IMR-90 (cell line): ENCODE measurements at regions of chr12 and their contacts with region 1.

Region 1: DNA sequence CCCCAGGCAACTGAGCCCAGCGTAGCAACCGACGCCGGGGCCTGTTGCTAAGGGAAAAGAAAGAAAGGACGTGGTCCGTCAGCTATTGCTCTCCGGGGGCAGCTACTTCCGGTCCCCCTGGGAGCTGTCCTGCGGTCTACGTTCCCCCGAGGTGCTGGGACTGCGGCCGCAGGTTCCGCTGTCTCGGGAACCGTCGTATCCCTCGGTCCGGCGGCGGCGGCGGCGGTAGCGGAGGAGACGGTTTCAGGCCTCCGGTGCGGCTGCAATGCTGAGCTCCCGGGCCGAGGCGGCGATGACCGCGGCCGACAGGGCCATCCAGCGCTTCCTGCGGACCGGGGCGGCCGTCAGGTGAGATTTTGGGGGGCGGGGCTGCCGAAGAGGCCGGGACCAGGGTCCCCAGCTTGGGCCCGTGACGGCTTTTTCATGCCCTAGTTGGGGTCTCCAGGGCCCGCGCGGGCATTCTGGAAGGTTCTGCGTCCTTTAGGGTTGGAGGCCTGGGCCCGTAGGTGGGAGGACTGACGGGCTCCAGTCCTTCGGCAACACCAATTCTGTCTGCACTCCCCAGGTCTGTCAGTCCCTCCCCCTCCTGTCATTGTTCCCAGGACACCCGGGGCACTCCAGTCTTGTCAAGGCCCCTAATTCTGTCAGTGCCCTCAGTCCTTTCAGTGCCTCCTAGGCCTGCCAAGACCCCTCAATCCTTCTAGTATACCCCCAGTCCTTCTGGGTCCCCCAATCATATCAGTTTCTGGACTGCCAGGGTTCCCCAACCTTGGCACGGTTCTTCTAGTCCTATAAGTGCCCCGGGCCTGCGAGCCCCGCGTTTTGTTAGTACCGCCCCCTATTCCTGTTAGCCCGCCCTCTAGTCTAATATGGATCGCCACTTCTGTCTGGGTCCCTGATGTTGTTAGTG is at the start of gene USP30:
- DNase-seq: peak; percentile 85
- ATAC-seq: peak; percentile 97
- H3K4me3 ChIP-seq: peak within 1 kb of the TSS; percentile 63
- H3K27ac ChIP-seq: peak within 1 kb of the TSS; percentile 47
- H3K4me1 ChIP-seq: 0 out of 2 replicates have a peak, but pooled peaks cover 4% of the 10 kb centered on the region
- H3K27me3 ChIP-seq: no peaks in the 10 kb centered on the region
- CTCF ChIP-seq: no peak
- POLR2A ChIP-seq: no peak
- RAD21 ChIP-seq: no peak
- total RNA-seq, gene USP30: 8.9 and 10.4 TPM in 2 replicates

Region 2: DNA sequence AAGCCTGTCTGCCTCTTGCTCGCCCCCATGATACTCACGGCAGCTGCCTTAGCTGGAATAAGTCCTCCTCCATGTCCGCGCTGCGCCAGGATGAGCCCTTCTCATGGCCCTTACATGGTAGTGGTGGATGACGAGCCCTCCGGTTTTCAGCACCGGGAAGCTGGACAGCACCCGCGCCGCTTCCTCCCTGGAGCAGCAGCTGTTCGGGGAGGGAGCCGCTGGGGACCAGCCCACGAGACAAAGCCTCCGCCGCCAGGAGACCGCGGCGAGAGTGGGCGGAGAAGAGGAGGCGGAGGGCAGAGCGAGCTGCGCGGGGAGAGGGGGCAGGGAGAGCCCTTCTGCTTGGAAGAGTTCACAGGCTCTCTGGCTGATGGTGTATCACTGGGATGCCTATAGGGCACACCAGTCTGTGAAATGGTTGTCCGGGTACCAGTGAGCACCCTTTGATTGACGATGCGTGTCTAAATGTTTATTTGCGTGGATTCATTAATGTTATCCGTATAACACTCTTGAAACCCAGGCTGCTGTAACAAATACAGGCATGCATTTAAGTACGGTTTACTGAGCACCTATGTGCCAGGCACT is 31.8 kb before region 1 on chr12 and contains the start of gene SVOP:
- CTCF ChIA-PET with region 1: no interaction called
- POLR2A ChIA-PET with region 1: no interaction called
- dilution Hi-C with region 1: no loop called
- in situ Hi-C with region 1: no loop called
- intact Hi-C with region 1: loop called (anchors 2 kb)
- DNase-seq: peak; percentile 76
- ATAC-seq: peak; percentile 100
- H3K4me3 ChIP-seq: no peak within 1 kb of the TSS
- H3K27ac ChIP-seq: no peak within 1 kb of the TSS
- H3K4me1 ChIP-seq: no peaks in the 10 kb centered on the region
- H3K27me3 ChIP-seq: no peaks in the 10 kb centered on the region
- CTCF ChIP-seq: no peak
- POLR2A ChIP-seq: no peak
- RAD21 ChIP-seq: no peak
- total RNA-seq, gene SVOP: not detected in 2 replicates